Activated naive CD4-positive, alpha-beta T cell treated with anti-CD3 and anti-CD28 coated beads for 36 hours (primary cell): ENCODE measurements at regions of chr10 and their contacts with region 1.

Region 1: DNA sequence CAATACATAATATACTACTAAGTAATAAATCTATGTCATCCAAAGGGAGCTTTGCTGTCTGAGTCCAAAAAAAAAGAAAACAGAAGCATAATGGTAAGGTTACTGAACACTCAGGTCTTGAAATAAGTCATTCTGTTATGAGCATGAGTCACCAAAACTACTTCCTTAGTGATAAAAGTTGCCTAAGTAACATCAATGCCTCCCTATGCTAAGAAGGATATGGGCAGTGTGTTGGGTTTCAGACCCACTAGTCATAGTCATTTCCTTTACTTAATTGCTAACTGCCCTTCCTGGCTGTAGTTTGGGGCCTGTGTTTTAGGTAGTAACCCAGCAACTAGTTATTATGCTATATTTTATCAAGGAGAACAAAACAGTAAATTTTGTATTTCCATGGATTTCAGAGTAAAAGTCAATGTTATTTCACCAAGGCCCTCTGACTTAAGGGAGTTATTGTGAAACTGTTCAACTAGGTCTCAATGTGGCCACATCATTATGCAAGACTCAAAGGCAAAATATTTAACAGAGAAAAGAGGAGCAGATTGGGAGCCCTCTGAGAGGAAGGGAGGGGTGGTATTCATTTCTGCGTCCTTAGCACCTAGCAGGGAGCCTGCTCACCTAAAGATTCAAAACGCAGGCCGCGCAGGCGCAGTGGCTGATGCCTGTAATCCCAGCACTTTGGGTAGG is 11.7 kb upstream of the VIM start:
- DNase-seq: peak; percentile 55
- H3K4me3 Mint-ChIP-seq: no peak overlapping the region
- H3K27ac Mint-ChIP-seq: peak overlapping the region; percentile 54
- H3K4me1 Mint-ChIP-seq: peaks cover 33% of the 10 kb centered on the region
- H3K27me3 Mint-ChIP-seq: no peaks in the 10 kb centered on the region

Region 2: GRCh38 chr10:16817125-16818019 is 399.0 kb before region 1 on chr10 and contains the start of gene RSU1:
- CTCF ChIA-PET with region 1: no interaction called
- intact Hi-C with region 1: loop called (anchors 1 kb)
- DNase-seq: peak; percentile 100
- H3K4me3 Mint-ChIP-seq: peak within 1 kb of the TSS; percentile 89
- H3K27ac Mint-ChIP-seq: peak within 1 kb of the TSS; percentile 90
- H3K4me1 Mint-ChIP-seq: peaks cover 23% of the 10 kb centered on the region
- H3K27me3 Mint-ChIP-seq: no peaks in the 10 kb centered on the region
- total RNA-seq, gene RSU1: 43.4 to 45.1 TPM

Region 3: GRCh38 chr10:17029581-17030271 is 186.6 kb before region 1 on chr10:
- CTCF ChIA-PET with region 1: no interaction called
- intact Hi-C with region 1: loop called (anchors 1 kb)
- DNase-seq: peak; percentile 94
- H3K4me3 Mint-ChIP-seq: peak overlapping the region; percentile 61
- H3K27ac Mint-ChIP-seq: peak overlapping the region; percentile 83
- H3K4me1 Mint-ChIP-seq: peaks cover 69% of the 10 kb centered on the region
- H3K27me3 Mint-ChIP-seq: no peaks in the 10 kb centered on the region

Region 4: GRCh38 chr10:17200912-17201793 is 15.2 kb before region 1 on chr10 and contains the start of gene TRDMT1:
- CTCF ChIA-PET with region 1: interaction called, 10 read pairs
- intact Hi-C with region 1: loop called (anchors 1 kb)
- DNase-seq: peak; percentile 77
- H3K4me3 Mint-ChIP-seq: peak within 1 kb of the TSS; percentile 86
- H3K27ac Mint-ChIP-seq: peak within 1 kb of the TSS; percentile 92
- H3K4me1 Mint-ChIP-seq: peaks cover 35% of the 10 kb centered on the region
- H3K27me3 Mint-ChIP-seq: no peaks in the 10 kb centered on the region
- total RNA-seq, gene TRDMT1: 6.5 to 7.2 TPM

Region 5: DNA sequence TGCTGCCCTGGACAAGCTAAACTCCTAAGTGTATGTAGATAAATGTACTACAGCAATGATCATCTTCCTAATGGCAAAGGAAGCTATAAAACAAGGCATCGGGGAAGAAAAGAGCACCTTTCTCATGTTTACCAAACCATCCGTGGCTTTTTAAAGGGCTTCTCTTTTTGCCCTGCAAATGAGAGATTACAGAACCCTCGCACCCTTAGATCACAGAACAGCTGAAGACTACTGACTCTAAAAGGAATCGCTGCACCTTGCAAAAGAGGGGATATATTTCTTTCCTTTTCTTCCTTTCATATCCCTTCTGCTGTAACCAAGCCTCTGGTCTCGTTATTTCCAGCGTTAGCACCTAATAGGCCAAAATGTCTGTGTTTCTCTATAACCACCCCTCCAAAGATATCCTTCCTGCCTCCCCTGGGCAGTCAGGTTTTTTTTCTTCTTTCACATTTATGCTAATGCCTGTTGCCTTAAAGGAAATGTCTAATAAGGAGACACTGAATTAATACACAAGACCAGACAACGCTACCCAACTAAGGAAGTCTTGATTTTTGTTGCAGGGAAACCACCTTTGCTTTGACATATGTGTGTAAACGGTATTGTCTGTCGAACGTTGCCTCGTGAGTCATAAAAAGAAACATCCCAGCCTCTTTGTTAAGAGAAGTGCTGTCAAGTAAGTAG is 227.5 kb after region 1 on chr10:
- CTCF ChIA-PET with region 1: interaction called, 3 read pairs
- intact Hi-C with region 1: loop called (anchors 1 kb)
- DNase-seq: peak; percentile 61
- H3K4me3 Mint-ChIP-seq: peak overlapping the region; percentile 46
- H3K27ac Mint-ChIP-seq: peak overlapping the region; percentile 28
- H3K4me1 Mint-ChIP-seq: peaks cover 16% of the 10 kb centered on the region
- H3K27me3 Mint-ChIP-seq: peaks cover 3% of the 10 kb centered on the region